ENCODE measurements at regions of chrX and their contacts with region 1.

Region 1: GRCh38 chrX:119004920-119005524 is 30.6 kb downstream of the LONRF3 start:
- DNase-seq: peak; percentile 59
- H3K4me3 ChIP-seq: no peak overlapping the region; a peak in 1 of 4 replicates
- H3K27ac ChIP-seq: no peak overlapping the region
- H3K4me1 ChIP-seq: no peaks in the 10 kb centered on the region
- H3K27me3 ChIP-seq: peaks cover 25% of the 10 kb centered on the region; the same call in 1 of the 2 replicates
- CTCF ChIP-seq: peak; percentile 92
- EP300 ChIP-seq: no peak
- RAD21 ChIP-seq: peak; percentile 62

Region 2: DNA sequence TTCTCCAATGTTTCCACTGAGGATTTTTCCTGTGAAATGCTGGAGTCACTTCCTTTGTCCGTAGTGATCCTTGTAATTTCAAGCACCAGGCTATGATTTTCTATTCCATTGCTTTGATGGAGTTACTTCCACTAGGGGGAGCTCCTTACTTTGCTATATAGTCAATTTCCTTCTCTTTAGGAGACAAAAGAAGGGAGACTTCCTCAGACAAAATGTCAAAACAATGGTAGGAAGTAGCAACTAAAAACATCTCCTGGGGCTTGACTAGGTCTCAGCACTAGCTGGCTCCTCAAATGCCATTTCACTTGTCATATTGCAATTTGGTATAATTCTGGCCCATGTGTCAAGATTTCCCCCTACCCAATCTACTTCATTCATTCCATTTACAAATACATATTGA is 157.3 kb before region 1 on chrX:
- CTCF ChIA-PET with region 1: interaction called, 11 read pairs
- POLR2A ChIA-PET with region 1: no interaction called
- DNase-seq: peak; percentile 61
- H3K4me3 ChIP-seq: no peak overlapping the region; a peak in 1 of 4 replicates
- H3K27ac ChIP-seq: no peak overlapping the region
- H3K4me1 ChIP-seq: no peaks in the 10 kb centered on the region
- H3K27me3 ChIP-seq: no peaks in the 10 kb centered on the region; the same call in 1 of the 2 replicates
- CTCF ChIP-seq: peak; percentile 83
- EP300 ChIP-seq: no peak
- RAD21 ChIP-seq: peak; percentile 76

Region 3: GRCh38 chrX:119015407-119016237 is 10.6 kb after region 1 on chrX:
- CTCF ChIA-PET with region 1: interaction called, 23 read pairs
- POLR2A ChIA-PET with region 1: no interaction called
- DNase-seq: no peak
- H3K4me3 ChIP-seq: no peak overlapping the region
- H3K27ac ChIP-seq: peak overlapping the region in 1 of 2 experiments; percentile 79; a peak in 2 of 4 replicates
- H3K4me1 ChIP-seq: no peaks in the 10 kb centered on the region
- H3K27me3 ChIP-seq: no peaks in the 10 kb centered on the region
- CTCF ChIP-seq: no peak
- EP300 ChIP-seq: peak in 1 of 2 experiments; percentile 74; a peak in 2 of 4 replicates
- RAD21 ChIP-seq: no peak

Region 4: DNA sequence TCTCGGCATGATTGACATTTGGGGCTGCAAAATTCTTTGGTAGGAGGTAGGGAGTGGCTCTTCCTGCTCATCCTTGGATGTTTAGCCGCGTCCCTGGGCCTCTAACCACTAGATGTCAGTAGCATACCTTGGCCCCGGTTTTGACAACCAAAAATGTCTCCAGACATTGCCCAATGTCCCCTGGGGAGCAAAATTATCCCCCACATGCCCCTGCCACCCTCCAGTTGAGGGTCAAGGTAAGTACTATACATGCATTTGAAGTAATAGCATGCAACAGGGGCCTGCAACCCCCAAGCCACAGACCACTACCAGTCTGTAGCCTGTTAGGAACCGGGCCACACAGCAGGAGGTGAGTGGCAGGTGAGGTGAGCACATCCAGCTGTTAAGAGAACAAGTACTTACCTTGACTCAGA is 140.2 kb after region 1 on chrX:
- CTCF ChIA-PET with region 1: no interaction called
- POLR2A ChIA-PET with region 1: no interaction called
- DNase-seq: no peak
- H3K4me3 ChIP-seq: no peak overlapping the region
- H3K27ac ChIP-seq: no peak overlapping the region
- H3K4me1 ChIP-seq: no peaks in the 10 kb centered on the region
- H3K27me3 ChIP-seq: peaks cover 34% of the 10 kb centered on the region
- CTCF ChIP-seq: peak; percentile 54
- EP300 ChIP-seq: no peak
- RAD21 ChIP-seq: peak; percentile 42

Region 5: GRCh38 chrX:119177278-119177677 is 172.3 kb after region 1 on chrX:
- CTCF ChIA-PET with region 1: no interaction called
- POLR2A ChIA-PET with region 1: no interaction called
- DNase-seq: no peak
- H3K4me3 ChIP-seq: no peak overlapping the region
- H3K27ac ChIP-seq: no peak overlapping the region
- H3K4me1 ChIP-seq: no peaks in the 10 kb centered on the region
- H3K27me3 ChIP-seq: peaks cover 5% of the 10 kb centered on the region; the same call in 1 of the 2 replicates
- CTCF ChIP-seq: no peak
- EP300 ChIP-seq: no peak
- RAD21 ChIP-seq: no peak

Region 6: DNA sequence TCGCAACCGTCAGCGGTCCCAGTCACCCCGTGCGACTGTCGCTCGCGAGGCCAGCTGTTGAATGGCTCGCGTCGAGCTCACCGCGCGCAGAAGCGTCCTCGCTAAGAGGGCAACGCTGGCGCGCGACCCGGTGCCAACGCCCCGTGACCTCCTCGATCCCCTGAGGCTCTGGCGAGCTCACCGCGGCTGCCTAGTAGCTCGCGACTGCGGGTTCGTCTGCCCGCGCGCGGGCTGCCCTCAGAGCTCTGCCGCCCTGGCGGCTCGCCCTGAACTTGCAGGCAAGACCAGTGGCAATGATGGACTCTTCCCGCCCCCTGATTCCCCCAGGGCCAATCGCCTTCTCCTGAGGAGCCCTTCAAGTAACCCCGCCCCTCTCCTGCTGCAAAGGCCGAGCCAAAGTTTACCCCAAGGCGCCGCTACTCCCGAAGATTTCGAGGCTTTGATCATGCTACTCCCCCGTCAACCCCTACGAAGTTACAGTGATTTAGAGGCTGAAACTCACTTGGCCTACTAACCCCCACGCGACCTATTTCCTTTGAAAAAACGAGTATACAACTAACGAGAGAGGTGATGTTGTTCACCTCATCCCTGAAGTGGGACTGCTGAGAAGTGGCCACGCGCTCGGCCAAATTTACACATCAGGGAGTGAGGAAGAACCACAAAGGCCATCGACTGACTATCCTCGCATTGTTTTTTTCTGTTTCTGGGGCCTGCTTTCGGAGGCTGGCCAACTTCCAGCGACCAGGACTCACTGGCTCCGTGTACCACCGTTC is 268.6 kb after region 1 on chrX:
- CTCF ChIA-PET with region 1: no interaction called
- POLR2A ChIA-PET with region 1: no interaction called
- DNase-seq: peak; percentile 27
- H3K4me3 ChIP-seq: no peak overlapping the region; a peak in 1 of 4 replicates
- H3K27ac ChIP-seq: no peak overlapping the region
- H3K4me1 ChIP-seq: no peaks in the 10 kb centered on the region
- H3K27me3 ChIP-seq: peaks cover 31% of the 10 kb centered on the region; the same call in 1 of the 2 replicates
- CTCF ChIP-seq: peak; percentile 14; the same call in 1 of the 2 replicates
- EP300 ChIP-seq: no peak
- RAD21 ChIP-seq: no peak

Measured in SK-N-SH (cell line).